ENCODE measurements at regions of chr14 and their contacts with region 1.

Region 1: DNA sequence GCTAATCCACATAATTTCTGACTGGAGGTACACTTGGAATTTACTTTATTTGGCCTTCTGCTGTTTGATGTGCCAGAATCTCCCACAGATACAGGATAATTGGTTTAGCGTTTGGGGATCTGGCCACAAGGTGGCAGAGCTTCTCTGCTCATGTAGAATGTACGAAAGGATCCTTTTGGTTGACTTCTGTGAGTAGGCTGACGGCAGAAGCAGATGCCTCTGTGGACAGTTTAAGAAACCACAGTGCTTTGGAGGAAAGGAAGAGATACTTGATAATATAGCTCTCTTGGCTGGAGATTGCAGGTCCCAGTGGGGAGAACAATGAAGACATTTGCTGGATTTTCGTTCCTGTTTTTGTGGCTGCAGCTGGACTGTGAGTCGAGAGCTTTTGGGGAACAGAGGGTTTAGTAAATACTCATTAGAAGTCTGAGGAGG is 75.3 kb upstream of the OR4E1 start:
- DNase-seq: peak; percentile 32
- ATAC-seq: peak; percentile 86
- H3K4me3 ChIP-seq: no peak overlapping the region
- H3K27ac ChIP-seq: no peak overlapping the region
- H3K4me1 ChIP-seq: no peaks in the 10 kb centered on the region
- H3K27me3 ChIP-seq: peaks cover 19% of the 10 kb centered on the region
- CTCF ChIP-seq: peak; percentile 22 to 78 (median 73); a peak in 5 of 6 replicates
- POLR2A ChIP-seq: no peak
- RAD21 ChIP-seq: peak; percentile 21

Region 2: GRCh38 chr14:21723431-21724045 is 25.3 kb before region 1 on chr14:
- CTCF ChIA-PET with region 1: interaction called, 14 read pairs
- POLR2A ChIA-PET with region 1: no interaction called
- RAD21 ChIA-PET with region 1: no interaction called
- intact Hi-C with region 1: no loop called
- DNase-seq: peak; percentile 32
- ATAC-seq: peak; percentile 99
- H3K4me3 ChIP-seq: no peak overlapping the region
- H3K27ac ChIP-seq: no peak overlapping the region
- H3K4me1 ChIP-seq: no peaks in the 10 kb centered on the region
- H3K27me3 ChIP-seq: peaks cover 36% of the 10 kb centered on the region
- CTCF ChIP-seq: peak in 2 of 3 experiments; percentile 73 to 86; a peak in 4 of 6 replicates
- POLR2A ChIP-seq: no peak
- RAD21 ChIP-seq: 0 out of 2 replicates have a peak, but pooled peaks have one; percentile 24

Region 3: DNA sequence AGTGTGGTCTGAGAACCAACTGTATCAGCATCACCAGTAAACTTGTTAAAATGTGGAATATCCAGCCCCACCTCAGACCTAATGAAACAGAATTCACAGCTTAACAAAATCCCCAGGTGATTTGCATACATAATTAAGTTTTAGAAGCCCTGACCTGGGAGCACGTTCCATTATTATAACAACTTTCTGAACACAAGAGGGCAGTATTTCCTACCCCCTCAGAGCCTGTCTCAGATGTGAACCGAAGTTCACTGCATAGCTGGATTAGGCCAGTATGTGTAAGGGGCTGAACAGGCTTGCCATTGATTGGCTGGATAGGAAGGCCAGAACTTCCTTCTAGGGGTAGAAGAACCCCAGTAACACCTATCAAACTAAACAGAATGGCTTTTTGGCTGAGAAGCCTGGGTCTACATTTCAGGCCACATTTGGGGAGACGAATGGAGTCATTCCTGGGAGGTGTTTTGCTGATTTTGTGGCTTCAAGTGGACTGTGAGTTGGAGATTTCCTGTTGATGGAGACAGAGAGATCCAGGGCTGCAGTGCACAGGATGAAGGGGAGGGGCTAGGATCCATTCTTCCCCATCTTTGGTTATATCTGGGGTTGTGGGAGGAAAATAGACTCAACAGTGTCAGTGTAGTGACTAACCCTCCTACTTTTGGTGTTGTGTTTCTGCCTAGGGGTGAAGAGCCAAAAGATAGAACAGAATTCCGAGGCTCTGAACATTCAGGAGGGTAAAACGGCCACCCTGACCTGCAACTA is 19.4 kb after region 1 on chr14:
- CTCF ChIA-PET with region 1: interaction called, 20 read pairs
- POLR2A ChIA-PET with region 1: no interaction called
- RAD21 ChIA-PET with region 1: no interaction called
- intact Hi-C with region 1: no loop called
- DNase-seq: peak; percentile 32
- ATAC-seq: peak; percentile 96
- H3K4me3 ChIP-seq: no peak overlapping the region
- H3K27ac ChIP-seq: no peak overlapping the region
- H3K4me1 ChIP-seq: peaks cover 0 to 6% of the 10 kb centered on the region in 2 experiments; a peak in 1 of 4 replicates
- H3K27me3 ChIP-seq: no peaks in the 10 kb centered on the region
- CTCF ChIP-seq: peak; percentile 21 to 68 (median 55); a peak in 5 of 6 replicates
- POLR2A ChIP-seq: no peak
- RAD21 ChIP-seq: peak; percentile 26; the same call in 1 of the 2 replicates